Colonic mucosa (tissue), 4 donors: ENCODE measurements at regions of chr1 and their contacts with region 1.

Region 1: GRCh38 chr1:211698161-211699026 is 23.0 kb upstream of the NEK2 start:
- DNase-seq: peak; percentile 88
- H3K4me3 ChIP-seq: no peak overlapping the region
- H3K27ac ChIP-seq: no peak overlapping the region
- H3K4me1 ChIP-seq: no peaks in the 10 kb centered on the region
- H3K27me3 ChIP-seq: no peaks in the 10 kb centered on the region
- CTCF ChIP-seq: peak; percentile 96

Region 2: DNA sequence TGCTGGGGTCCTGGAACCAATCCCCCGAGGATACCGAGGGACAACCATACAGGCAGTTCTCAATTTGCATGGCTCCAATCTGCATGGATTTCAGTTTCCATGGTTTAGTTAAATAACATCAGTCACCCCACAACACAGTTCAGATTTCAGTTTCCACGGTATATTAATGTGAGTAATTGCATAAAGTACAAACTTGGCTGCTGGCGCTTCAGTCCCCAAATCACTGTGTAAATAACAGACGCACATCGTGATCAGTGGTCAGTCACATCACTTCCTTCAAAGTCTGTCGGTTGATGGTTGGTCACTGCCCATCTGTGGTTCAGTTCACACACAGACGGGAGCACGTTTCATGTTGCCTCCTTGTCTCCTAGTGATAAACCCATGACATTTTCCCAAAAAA is 198.6 kb after region 1 on chr1:
- intact Hi-C with region 1: no loop called
- DNase-seq: no peak
- H3K4me3 ChIP-seq: no peak overlapping the region
- H3K27ac ChIP-seq: no peak overlapping the region
- H3K4me1 ChIP-seq: no peaks in the 10 kb centered on the region
- H3K27me3 ChIP-seq: no peaks in the 10 kb centered on the region
- CTCF ChIP-seq: no peak

Region 3: DNA sequence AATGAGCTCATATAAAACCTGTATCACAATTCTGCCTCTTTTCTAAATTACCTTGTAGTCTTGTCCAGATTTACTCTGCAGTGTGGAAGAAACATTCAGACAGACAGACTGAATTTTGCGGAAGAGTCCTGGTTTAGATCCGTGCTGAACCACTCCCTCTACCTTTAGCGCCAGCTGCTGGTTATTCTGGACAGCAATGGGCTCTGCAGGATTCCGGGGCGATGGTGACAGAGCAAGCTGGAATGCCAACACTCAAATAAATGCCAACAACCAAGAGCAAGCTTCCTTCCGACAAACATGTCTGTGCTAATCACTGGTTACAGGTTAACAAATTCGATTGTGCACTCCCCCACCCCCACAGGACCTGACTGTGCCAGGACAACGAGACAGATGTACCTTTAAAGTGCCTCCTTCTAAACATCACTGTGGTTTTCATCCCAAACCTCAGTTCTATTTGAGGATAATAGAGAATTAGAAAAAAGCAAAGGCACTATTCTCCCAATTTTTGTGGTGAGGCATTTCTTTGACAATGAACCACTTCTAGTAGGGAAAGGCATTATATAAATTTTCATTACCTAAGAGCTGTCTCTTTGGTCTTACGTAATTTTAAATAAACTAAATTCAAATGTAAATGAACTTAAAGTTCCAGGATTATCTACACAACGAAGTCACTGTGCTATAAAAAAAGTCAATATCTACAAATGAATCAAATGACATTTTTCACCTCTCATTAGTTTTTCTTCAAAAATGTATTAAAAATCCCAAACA is 246.5 kb after region 1 on chr1:
- intact Hi-C with region 1: loop called (anchors 5 kb)
- DNase-seq: peak; percentile 81
- H3K4me3 ChIP-seq: no peak overlapping the region
- H3K27ac ChIP-seq: no peak overlapping the region
- H3K4me1 ChIP-seq: no peaks in the 10 kb centered on the region
- H3K27me3 ChIP-seq: no peaks in the 10 kb centered on the region
- CTCF ChIP-seq: peak; percentile 71

Region 4: DNA sequence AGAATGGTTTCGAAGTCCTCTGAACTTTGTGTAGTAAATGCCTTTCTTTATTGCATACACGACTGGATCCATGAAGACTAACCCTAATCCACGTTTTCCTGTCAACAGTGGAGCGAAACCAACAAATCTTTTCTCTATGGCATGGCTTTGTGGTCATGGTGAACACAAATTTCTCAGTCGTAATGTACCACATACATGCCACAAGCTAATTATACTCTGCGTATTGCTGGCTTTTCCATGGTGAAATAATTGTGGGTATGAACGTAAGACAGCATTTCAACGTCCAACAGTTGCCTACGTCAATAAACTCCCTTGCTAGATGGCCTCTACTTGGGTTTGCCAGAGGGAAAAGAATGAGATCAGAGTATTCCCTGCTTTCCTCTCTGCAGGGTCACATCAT is 309.5 kb after region 1 on chr1:
- intact Hi-C with region 1: loop called (anchors 5 kb)
- DNase-seq: no peak
- H3K4me3 ChIP-seq: no peak overlapping the region
- H3K27ac ChIP-seq: no peak overlapping the region
- H3K4me1 ChIP-seq: no peaks in the 10 kb centered on the region
- H3K27me3 ChIP-seq: no peaks in the 10 kb centered on the region
- CTCF ChIP-seq: no peak